ENCODE measurements at regions of chr10 and their contacts with region 1.

Region 1: GRCh38 chr10:13787015-13787421 is 200.3 kb downstream of the PRPF18 start:
- DNase-seq: no peak
- H3K4me3 ChIP-seq: no peak overlapping the region
- H3K27ac ChIP-seq: no peak overlapping the region
- H3K27me3 ChIP-seq: no peaks in the 10 kb centered on the region
- CTCF ChIP-seq: no peak

Region 2: GRCh38 chr10:13613519-13613918 is 173.5 kb before region 1 on chr10:
- CTCF ChIA-PET with region 1: interaction called, 15 read pairs
- POLR2A ChIA-PET with region 1: no interaction called
- DNase-seq: no peak
- H3K4me3 ChIP-seq: no peak overlapping the region
- H3K27ac ChIP-seq: no peak overlapping the region
- H3K27me3 ChIP-seq: no peaks in the 10 kb centered on the region
- CTCF ChIP-seq: peak; percentile 56

Region 3: DNA sequence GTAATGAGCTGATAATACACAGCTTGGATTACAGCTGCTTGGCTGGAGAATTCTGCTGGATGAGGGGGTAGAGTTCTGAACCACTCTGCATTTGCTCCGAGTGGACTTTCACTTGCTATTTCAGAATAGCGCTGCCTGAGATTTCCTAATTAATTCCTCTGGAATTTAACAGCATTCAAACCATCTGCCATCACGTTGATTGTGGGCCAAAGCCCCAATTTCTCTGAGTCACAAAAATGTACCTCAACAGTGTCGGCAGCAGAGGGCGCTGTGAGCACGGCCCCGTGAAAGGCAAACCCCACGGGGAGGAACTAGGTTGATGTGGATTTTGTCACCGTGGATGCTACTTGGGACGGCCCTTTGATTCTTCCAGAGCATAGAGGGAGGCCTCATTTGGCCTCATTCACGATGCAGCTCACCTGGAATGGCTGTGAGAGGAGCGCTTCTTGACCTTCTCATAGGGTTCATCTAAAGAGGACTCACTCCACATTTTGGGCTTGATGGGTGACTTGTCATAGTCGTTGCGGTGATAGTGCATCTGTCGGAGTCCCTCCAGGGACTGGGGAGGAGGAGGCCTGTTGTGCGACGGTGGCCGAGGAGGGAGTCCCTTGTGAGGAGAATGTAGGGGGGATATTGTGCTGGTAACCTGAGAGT is 127.0 kb before region 1 on chr10:
- CTCF ChIA-PET with region 1: interaction called, 17 read pairs
- POLR2A ChIA-PET with region 1: no interaction called
- DNase-seq: peak; percentile 21
- H3K4me3 ChIP-seq: no peak overlapping the region
- H3K27ac ChIP-seq: peak overlapping the region; percentile 12
- H3K27me3 ChIP-seq: no peaks in the 10 kb centered on the region
- CTCF ChIP-seq: peak; percentile 93

Region 4: GRCh38 chr10:14093730-14094484 is 306.9 kb after region 1 on chr10:
- CTCF ChIA-PET with region 1: interaction called, 24 read pairs
- POLR2A ChIA-PET with region 1: no interaction called
- DNase-seq: peak; percentile 24
- H3K4me3 ChIP-seq: no peak overlapping the region
- H3K27ac ChIP-seq: no peak overlapping the region
- H3K27me3 ChIP-seq: no peaks in the 10 kb centered on the region
- CTCF ChIP-seq: peak; percentile 75

Measured in AG04450 (cell line).